Activated CD4-positive, alpha-beta T cell treated with anti-CD3 and anti-CD28 coated beads for 36 hours (primary cell): ENCODE measurements at regions of chr3 and their contacts with region 1.

Region 1: DNA sequence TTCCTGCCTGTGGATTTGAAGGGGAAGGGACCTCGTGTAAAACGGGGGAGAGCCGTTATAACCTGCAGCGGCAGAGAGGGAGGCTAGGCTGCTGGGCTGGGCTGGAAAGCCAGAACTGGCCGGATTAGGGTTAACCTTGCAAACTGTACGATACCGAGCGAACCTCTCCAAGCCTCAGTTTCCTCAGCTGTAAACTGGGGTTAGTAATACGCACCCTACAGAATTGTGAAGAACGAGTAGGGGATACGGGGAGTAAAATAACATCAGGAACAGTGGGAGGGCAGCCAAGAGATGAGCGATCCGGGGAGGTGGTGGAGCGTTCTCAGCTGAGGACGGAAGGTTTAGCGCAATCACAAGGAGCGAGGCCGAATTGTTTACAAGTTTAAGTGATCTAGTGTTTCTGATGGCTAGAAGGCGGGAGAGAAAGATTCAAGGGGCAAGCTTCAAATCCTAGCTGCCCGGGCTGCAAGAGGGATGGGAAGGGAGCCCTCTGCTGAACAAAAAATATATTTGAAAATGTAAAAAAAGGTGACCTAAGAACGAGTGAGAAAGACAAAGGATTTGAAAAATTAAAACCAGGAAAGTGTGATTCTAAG is 768 bp upstream of the SEMA5B start:
- DNase-seq: peak; percentile 47
- ATAC-seq: peak; percentile 51
- H3K4me3 Mint-ChIP-seq: peak overlapping the region; percentile 44
- H3K27ac Mint-ChIP-seq: no peak overlapping the region
- H3K4me1 Mint-ChIP-seq: peaks cover 19% of the 10 kb centered on the region
- H3K27me3 Mint-ChIP-seq: peaks cover 54% of the 10 kb centered on the region

Region 2: GRCh38 chr3:122458992-122459391 is 569.3 kb before region 1 on chr3:
- CTCF ChIA-PET with region 1: no interaction called
- POLR2A ChIA-PET with region 1: no interaction called
- intact Hi-C with region 1: no loop called
- DNase-seq: no peak
- ATAC-seq: no peak
- H3K4me3 Mint-ChIP-seq: no peak overlapping the region
- H3K27ac Mint-ChIP-seq: peak overlapping the region; percentile 29
- H3K4me1 Mint-ChIP-seq: peaks cover 6% of the 10 kb centered on the region
- H3K27me3 Mint-ChIP-seq: no peaks in the 10 kb centered on the region

Region 3: DNA sequence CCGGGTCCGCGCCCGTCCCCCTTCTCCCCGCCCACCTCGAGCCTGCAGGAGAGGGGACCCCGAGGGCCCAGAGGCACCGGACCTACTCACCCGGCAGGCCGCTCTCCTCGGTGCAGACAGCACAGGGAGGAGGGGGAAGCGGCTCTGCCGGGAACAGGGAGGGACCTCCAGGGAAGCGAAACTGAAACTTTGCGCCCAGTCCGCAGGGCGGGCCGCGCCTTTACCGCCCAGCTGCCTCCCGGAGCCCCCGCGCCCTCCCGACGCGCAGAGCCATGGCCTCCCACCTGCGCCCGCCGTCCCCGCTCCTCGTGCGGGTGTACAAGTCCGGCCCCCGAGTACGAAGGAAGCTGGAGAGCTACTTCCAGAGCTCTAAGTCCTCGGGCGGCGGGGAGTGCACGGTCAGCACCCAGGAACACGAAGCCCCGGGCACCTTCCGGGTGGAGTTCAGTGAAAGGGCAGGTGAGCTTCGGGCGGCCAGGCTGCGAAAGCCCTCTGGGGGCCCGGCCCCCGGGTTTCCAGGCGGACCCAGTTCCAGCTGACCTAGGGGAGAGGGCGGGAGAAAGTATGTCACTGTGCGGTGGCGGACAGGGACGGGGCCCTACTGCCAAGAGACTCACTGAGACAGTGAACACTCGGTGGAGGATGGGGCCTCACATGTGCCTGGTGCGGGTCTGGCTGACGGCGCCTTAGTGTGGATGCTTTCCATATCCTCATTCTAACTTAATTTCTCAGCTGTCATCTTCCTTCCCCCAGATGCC is 464.0 kb before region 1 on chr3 and contains the starts of genes DTX3L and PARP9:
- CTCF ChIA-PET with region 1: interaction called, 4 read pairs
- POLR2A ChIA-PET with region 1: no interaction called
- intact Hi-C with region 1: loop called in 1 of 2 experiments (anchors 5 kb)
- DNase-seq: peak; percentile 89
- ATAC-seq: peak; percentile 83
- H3K4me3 Mint-ChIP-seq: peak within 1 kb of the TSS; percentile 83
- H3K27ac Mint-ChIP-seq: peak within 1 kb of the TSS; percentile 97
- H3K4me1 Mint-ChIP-seq: peaks cover 67% of the 10 kb centered on the region
- H3K27me3 Mint-ChIP-seq: no peaks in the 10 kb centered on the region
- total RNA-seq, gene DTX3L: 42.0 to 52.0 TPM
- total RNA-seq, gene PARP9: 39.9 to 46.0 TPM

Region 4: GRCh38 chr3:122754929-122755328 is 273.4 kb before region 1 on chr3:
- CTCF ChIA-PET with region 1: interaction called, 8 read pairs
- POLR2A ChIA-PET with region 1: no interaction called
- intact Hi-C with region 1: loop called (anchors 1 to 2 kb)
- DNase-seq: peak; percentile 18
- ATAC-seq: peak; percentile 87
- H3K4me3 Mint-ChIP-seq: no peak overlapping the region
- H3K27ac Mint-ChIP-seq: no peak overlapping the region
- H3K4me1 Mint-ChIP-seq: no peaks in the 10 kb centered on the region
- H3K27me3 Mint-ChIP-seq: no peaks in the 10 kb centered on the region

Region 5: DNA sequence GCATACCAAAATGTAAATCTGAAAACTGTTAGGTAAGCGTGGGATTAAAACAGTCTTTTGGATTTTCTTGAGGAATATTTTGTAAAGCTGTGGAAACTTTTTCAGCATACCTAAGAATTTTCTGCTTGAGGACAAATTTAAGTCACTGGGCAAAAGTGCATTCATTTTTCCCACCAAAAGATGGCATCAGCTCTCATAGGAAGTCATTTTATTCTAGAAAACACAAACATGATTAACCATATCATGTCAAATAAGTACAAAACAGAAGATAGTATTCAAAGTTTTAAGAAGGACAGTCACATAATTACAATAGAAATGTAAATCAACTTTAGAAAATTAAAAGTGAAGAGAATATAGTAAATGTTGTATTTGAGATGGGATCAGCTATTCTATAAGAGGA is 170.0 kb before region 1 on chr3:
- CTCF ChIA-PET with region 1: interaction called, 4 read pairs
- POLR2A ChIA-PET with region 1: no interaction called
- intact Hi-C with region 1: loop called in 1 of 2 experiments (anchors 5 kb)
- DNase-seq: no peak
- ATAC-seq: no peak
- H3K4me3 Mint-ChIP-seq: no peak overlapping the region
- H3K27ac Mint-ChIP-seq: no peak overlapping the region
- H3K4me1 Mint-ChIP-seq: peaks cover 9% of the 10 kb centered on the region
- H3K27me3 Mint-ChIP-seq: no peaks in the 10 kb centered on the region

Region 6: DNA sequence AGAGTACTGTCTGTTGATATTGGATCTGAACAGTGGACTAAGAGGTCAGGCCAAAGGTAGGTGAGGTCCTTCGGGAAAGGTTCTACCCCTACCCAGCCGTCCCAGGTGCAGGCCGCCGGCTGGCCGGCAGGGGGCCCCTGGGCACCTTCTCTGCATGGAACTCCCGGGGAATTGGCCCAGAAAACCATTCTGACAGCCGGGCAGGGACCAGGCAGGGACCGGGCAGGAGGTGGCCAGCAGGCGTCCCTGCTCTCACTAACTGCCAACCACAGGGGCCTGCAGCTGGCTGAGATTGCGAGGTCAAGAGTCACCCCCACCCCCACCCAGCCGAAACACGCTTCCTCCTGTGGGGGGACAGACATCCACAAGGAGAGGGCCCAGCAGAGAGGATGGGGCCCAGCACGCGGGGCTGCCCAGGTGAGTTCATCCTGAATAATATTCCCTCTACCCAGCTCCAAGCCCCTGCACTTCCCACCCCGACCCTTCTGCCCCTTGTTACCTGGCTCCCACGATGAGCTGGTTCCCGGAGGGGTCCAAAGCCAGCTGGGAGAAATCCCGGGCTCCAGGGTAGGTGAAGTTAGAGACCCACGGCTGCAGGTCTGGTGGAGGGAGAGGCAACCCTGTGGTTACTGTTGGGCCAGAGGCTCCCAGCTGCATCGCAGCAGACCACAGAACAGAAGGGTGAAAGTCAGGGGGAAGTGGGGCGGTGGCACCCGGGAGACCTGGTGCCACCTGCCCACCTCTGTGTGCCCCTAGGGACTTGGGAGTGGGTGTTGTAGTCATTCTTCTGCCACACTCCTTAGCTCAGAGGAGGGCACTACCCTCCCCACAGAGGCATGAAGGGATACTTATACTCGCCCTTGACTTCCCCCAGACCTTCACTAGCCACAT is 85.1 kb before region 1 on chr3:
- CTCF ChIA-PET with region 1: interaction called, 11 read pairs
- POLR2A ChIA-PET with region 1: no interaction called
- intact Hi-C with region 1: loop called (anchors 1 to 2 kb)
- DNase-seq: peak; percentile 69
- ATAC-seq: peak; percentile 72
- H3K4me3 Mint-ChIP-seq: no peak overlapping the region
- H3K27ac Mint-ChIP-seq: no peak overlapping the region
- H3K4me1 Mint-ChIP-seq: no peaks in the 10 kb centered on the region
- H3K27me3 Mint-ChIP-seq: peaks cover 6% of the 10 kb centered on the region

Region 7: DNA sequence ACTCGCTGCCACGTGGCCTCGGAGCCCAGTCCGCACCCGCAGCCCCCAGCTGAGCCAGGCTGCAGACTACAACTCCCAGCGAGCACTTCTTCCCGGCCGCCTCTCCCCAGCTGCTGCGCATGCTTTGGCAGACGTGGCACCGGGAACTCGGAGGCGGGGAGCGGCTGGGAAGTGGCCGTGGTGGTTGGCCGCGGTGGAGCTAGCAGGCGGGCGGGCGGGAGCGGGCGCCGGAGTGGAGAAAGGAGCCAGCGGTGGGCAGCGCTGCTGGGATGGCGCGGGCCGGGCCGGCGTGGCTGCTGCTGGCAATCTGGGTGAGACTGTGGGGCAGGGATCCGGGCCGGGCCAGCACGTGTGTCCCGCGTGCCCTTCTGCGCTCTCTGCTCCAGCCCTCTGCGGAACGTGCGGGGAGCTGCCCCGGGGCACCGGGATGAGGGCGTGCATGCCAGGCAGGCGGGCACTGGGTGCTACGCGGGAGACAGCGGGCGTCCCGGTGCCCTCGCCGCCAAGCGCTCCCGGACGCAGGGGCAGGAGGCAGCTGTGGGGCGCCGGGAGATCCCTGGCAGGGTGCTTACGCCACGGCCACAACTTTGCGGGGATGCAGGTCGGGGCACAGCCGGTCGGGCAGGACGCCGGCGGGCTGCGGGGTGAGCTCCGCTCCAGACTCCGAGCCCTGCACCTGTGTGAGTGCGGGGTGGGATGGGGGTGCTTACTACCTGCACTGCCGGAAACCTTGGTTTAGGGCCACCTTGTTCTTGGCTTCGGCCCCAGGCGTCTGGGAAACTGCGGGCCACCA is 38.8 kb after region 1 on chr3 and contains the start of gene PDIA5:
- CTCF ChIA-PET with region 1: interaction called, 13 read pairs
- POLR2A ChIA-PET with region 1: no interaction called
- intact Hi-C with region 1: no loop called
- DNase-seq: peak; percentile 87
- ATAC-seq: peak; percentile 83
- H3K4me3 Mint-ChIP-seq: peak within 1 kb of the TSS; percentile 87
- H3K27ac Mint-ChIP-seq: peak within 1 kb of the TSS; percentile 80
- H3K4me1 Mint-ChIP-seq: peaks cover 40% of the 10 kb centered on the region
- H3K27me3 Mint-ChIP-seq: no peaks in the 10 kb centered on the region
- total RNA-seq, gene PDIA5: 19.5 to 20.7 TPM